ENCODE measurements at regions of chr14 and their contacts with region 1.

Region 1: GRCh38 chr14:21103710-21104447 is 3.0 kb downstream of the TMEM253 start:
- DNase-seq: peak; percentile 97 to 99 (median 97)
- ATAC-seq: peak; percentile 94 to 97 (median 96)
- H3K4me3 ChIP-seq: peak overlapping the region; percentile 61 to 88 (median 76)
- H3K27ac ChIP-seq: peak overlapping the region; percentile 95 to 100 (median 97)
- H3K4me1 ChIP-seq: peaks cover 0 to 53% (median 37%) of the 10 kb centered on the region in 12 donors
- H3K27me3 ChIP-seq: no peaks in the 10 kb centered on the region
- CTCF ChIP-seq: peak; percentile 57 to 93 (median 80)
- POLR2A ChIP-seq: peak in 1 of 2 donors; percentile 91

Region 2: GRCh38 chr14:20690848-20691523 is 412.9 kb before region 1 on chr14:
- intact Hi-C with region 1: loop called in 3 of 10 experiments (anchors 10 kb)
- DNase-seq: peak in 3 of 5 donors; percentile 28 to 42 (median 30)
- ATAC-seq: peak; percentile 64 to 89 (median 87)
- H3K4me3 ChIP-seq: no peak overlapping the region
- H3K27ac ChIP-seq: no peak overlapping the region
- H3K4me1 ChIP-seq: peaks cover 0 to 19% (median 4%) of the 10 kb centered on the region in 12 donors
- H3K27me3 ChIP-seq: no peaks in the 10 kb centered on the region
- CTCF ChIP-seq: peak; percentile 76 to 90 (median 85)
- POLR2A ChIP-seq: no peak

Region 3: DNA sequence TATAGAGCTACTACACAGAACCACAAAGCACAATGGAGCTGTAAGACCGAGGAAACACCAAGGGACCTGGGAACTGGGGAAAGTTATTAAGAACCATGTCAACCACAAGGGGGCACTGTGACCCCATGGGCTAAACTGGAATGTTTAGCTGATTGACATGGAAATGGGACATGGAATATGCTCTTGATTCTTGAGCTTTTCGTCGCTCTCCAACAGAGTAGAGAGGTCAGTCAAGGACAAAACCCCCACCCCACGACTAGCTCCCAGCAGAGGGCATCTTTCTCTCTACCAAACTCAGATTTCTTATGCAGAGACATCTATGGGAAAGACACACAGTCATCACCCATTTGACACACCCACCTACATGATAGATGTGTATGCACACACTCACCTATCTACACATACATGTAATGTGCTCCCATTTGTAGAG is 89.1 kb before region 1 on chr14:
- intact Hi-C with region 1: loop called in 6 of 10 experiments (anchors 1 to 5 kb)
- DNase-seq: peak; percentile 82 to 85 (median 84)
- ATAC-seq: peak; percentile 58 to 85 (median 82)
- H3K4me3 ChIP-seq: no peak overlapping the region
- H3K27ac ChIP-seq: peak overlapping the region in 4 of 12 donors; percentile 9 to 28 (median 22)
- H3K4me1 ChIP-seq: peaks cover 0 to 27% (median 7%) of the 10 kb centered on the region in 12 donors
- H3K27me3 ChIP-seq: no peaks in the 10 kb centered on the region
- CTCF ChIP-seq: peak; percentile 86 to 99 (median 96)
- POLR2A ChIP-seq: no peak

Region 4: DNA sequence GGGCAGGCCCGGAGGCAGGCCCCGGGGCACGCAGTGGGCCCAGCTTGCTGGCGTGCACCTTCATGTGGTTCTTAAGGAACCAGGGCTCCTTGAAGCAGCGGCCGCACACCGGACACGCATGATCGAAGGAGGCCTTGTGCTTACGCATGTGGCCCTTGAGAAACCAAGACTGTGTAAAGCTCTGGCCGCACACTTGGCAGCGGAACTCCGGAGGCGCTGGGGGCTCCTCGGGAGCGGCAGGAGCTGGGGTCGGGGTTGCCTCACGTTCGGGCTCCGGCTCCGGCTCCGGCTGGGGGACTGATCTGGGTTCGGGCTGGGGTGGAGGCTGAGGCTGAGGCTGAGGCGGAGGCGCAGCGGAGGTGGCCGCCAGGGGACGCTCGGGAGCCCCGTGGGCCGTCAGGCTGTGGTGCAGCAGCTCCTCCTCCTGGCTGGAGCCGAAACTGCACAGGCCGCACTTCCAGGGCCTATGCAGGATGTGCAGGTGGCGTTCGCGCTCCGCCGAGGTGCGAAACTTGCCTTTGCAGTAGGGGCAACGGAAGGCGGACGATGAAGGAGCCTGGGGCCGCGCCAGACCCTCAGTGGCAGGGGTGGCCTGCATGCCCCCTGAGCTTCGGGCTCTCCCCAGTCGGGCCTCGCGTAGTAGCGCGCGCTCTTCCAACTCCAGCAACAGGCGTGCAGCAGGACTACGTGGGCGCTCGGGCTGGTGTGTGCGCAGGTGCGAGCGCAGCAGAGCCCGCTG is 11.4 kb before region 1 on chr14:
- intact Hi-C with region 1: loop called in 1 of 10 experiments (anchors 1 kb)
- DNase-seq: peak; percentile 81 to 95 (median 86)
- ATAC-seq: peak; percentile 43 to 87 (median 76)
- H3K4me3 ChIP-seq: peak overlapping the region in 1 of 12 donors; percentile 3
- H3K27ac ChIP-seq: peak overlapping the region in 2 of 12 donors; percentile 21 to 24
- H3K4me1 ChIP-seq: peaks cover 0 to 34% (median 11%) of the 10 kb centered on the region in 12 donors
- H3K27me3 ChIP-seq: no peaks in the 10 kb centered on the region
- CTCF ChIP-seq: peak in 11 of 12 donors; percentile 99 to 100 (median 100)
- POLR2A ChIP-seq: peak in 1 of 2 donors; percentile 22

Region 5: GRCh38 chr14:21145437-21145836 is 41.6 kb after region 1 on chr14:
- intact Hi-C with region 1: no loop called
- DNase-seq: no peak
- ATAC-seq: no peak
- H3K4me3 ChIP-seq: no peak overlapping the region
- H3K27ac ChIP-seq: no peak overlapping the region
- H3K4me1 ChIP-seq: no peaks in the 10 kb centered on the region
- H3K27me3 ChIP-seq: no peaks in the 10 kb centered on the region
- CTCF ChIP-seq: no peak
- POLR2A ChIP-seq: no peak